ENCODE measurements at regions of chr4 and their contacts with region 1.

Region 1: GRCh38 chr4:88613417-88613875 is 21.2 kb downstream of the HERC3 start:
- DNase-seq: peak; percentile 43
- ATAC-seq: peak; percentile 77
- H3K4me3 Mint-ChIP-seq: peak overlapping the region; percentile 68
- H3K27ac Mint-ChIP-seq: peak overlapping the region; percentile 92
- H3K4me1 Mint-ChIP-seq: peaks cover 76% of the 10 kb centered on the region
- H3K27me3 Mint-ChIP-seq: no peaks in the 10 kb centered on the region
- CTCF ChIP-seq: no peak

Region 2: DNA sequence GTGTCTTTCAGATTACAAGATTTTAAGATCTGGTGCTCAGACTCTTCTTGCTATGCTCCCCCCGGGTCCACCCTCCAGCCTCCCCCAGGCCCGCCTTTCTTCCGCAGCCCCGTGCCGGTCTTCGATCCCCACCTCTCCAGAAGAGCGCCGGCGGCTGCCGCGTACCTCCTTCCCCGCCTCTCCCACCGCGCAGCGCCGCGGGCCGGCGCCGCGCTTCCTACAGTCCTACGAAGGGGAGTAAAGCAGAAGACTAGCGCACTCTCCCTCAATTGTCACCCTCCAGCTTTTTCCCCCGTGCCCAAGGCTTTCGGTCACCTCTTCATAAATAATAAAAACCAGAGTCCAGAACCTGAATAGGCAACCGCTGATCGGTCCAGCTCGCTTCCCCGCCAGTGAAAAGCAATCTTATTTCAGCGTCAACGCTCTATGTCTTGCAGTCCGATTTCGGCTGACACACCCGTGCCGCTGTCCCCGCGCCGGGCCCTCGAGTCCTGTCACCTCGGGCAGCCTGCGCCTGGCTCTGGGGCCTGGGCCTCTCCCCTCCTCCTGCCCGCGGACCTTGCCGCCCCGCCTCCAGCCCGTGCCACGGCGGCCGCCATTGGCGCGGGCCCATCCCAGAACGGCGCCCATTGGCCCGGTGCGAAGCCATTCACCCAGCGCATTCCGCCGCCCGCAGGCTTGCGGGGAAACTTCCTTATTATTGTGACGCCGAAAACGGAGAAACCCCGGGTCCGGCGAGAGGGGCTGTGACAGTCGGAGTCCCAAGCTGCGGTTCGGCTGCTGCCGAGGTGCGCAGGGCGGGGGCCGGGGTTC is 21.5 kb before region 1 on chr4 and contains the start of gene HERC3:
- CTCF ChIA-PET with region 1: interaction called, 8 read pairs
- POLR2A ChIA-PET with region 1: interaction called, 23 read pairs
- intact Hi-C with region 1: loop called (anchors 2 kb)
- DNase-seq: peak; percentile 87
- ATAC-seq: peak; percentile 87
- H3K4me3 Mint-ChIP-seq: peak within 1 kb of the TSS; percentile 84
- H3K27ac Mint-ChIP-seq: peak within 1 kb of the TSS; percentile 80
- H3K4me1 Mint-ChIP-seq: peaks cover 38% of the 10 kb centered on the region
- H3K27me3 Mint-ChIP-seq: peaks cover 2% of the 10 kb centered on the region
- CTCF ChIP-seq: no peak
- total RNA-seq, gene HERC3: 59.7 to 66.4 TPM

Region 3: GRCh38 chr4:88600176-88600838 is 13.1 kb before region 1 on chr4:
- CTCF ChIA-PET with region 1: interaction called, 24 read pairs
- POLR2A ChIA-PET with region 1: interaction called, 11 read pairs
- intact Hi-C with region 1: no loop called
- DNase-seq: no peak
- ATAC-seq: no peak
- H3K4me3 Mint-ChIP-seq: no peak overlapping the region
- H3K27ac Mint-ChIP-seq: no peak overlapping the region
- H3K4me1 Mint-ChIP-seq: peaks cover 75% of the 10 kb centered on the region
- H3K27me3 Mint-ChIP-seq: no peaks in the 10 kb centered on the region
- CTCF ChIP-seq: no peak

Region 4: DNA sequence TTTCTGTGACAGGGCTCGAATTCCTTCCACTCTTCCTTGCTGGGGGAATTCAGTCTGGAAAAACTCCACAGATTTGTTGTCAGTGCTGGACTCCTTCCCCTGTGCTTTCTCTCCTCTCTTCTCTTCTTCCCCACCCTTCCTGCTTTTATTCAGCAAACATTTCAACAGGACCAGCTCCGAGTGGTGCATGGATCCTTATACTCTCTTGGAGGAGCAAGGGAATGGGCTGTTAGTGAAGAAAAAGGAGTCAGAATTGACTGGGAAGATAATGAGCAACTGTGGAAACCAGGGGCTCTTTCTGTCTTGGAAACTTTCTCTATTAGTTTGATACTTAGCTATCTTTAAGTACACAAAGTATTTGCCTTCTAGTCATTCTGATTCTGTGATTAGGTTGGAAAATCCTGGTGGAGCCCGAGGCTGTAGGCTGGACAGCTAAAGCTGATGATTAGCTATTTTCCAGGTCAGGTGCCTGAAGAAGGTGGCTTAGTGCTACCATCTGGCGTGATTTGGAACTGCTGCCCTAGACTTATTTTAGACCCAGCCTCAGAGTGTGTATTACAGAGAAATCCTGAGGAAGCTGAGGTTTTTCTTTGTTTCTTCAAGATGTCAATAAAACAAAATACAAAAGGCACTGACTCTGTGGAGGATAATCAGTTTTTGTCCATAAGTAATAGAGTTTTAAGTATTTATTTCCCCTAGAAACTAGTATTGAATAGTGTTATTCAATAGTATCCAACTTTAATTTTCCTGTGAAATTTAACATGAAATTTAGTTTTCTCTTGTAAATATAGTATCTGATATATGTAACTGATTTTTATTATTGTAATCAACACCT is 45.8 kb after region 1 on chr4:
- CTCF ChIA-PET with region 1: interaction called, 14 read pairs
- POLR2A ChIA-PET with region 1: no interaction called
- intact Hi-C with region 1: no loop called
- DNase-seq: peak; percentile 57
- ATAC-seq: peak; percentile 87
- H3K4me3 Mint-ChIP-seq: no peak overlapping the region
- H3K27ac Mint-ChIP-seq: no peak overlapping the region
- H3K4me1 Mint-ChIP-seq: peaks cover 3% of the 10 kb centered on the region
- H3K27me3 Mint-ChIP-seq: no peaks in the 10 kb centered on the region
- CTCF ChIP-seq: peak; percentile 67